ENCODE measurements at regions of chr6 and their contacts with region 1.

Region 1: DNA sequence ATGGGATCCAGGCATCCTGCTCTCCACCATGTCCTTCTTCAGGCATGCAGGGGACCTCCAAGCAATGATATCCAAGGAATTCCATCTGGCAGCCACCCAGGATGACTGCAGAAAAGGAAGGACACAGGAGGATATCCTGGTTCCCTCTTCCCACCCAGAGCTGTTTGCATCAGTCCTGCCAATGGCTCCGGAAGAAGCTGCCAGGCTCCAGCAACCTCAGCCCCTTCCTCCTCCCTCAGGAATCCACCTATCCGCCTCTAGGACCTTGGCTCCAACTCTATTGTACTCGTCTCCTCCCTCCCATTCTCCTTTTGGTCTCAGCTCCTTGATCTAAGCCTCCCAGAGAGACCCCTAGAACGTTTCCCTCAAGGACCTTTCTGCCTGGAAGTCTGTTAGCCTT is 733 bp upstream of the PSORS1C2 start:
- DNase-seq: no peak
- ATAC-seq: no peak
- H3K4me3 ChIP-seq: no peak overlapping the region
- H3K27ac ChIP-seq: no peak overlapping the region
- H3K4me1 ChIP-seq: peaks cover 4 to 13% of the 10 kb centered on the region in 2 experiments; a peak in 3 of 4 replicates
- H3K27me3 ChIP-seq: no peaks in the 10 kb centered on the region
- CTCF ChIP-seq: no peak
- POLR2A ChIP-seq: no peak
- RAD21 ChIP-seq: no peak

Region 2: DNA sequence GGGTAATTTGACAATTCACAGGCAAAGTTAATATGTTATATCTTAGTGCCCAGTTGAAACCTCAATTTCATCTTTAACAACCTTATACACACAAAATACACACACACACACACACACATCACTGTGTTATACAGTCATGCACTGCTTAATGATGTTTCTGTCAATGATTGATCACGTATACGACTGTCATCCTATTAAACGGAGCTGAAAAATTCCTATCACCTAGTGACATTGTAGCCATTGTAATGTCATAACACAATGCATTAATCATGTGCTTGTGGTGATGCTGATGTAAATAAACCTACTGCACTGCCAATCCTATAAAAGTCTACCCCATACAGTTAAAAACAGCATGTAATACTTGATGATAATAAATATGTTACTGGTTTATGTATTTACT is 715.0 kb before region 1 on chr6:
- CTCF ChIA-PET with region 1: no interaction called
- POLR2A ChIA-PET with region 1: no interaction called
- RAD21 ChIA-PET with region 1: no interaction called
- intact Hi-C with region 1: no loop called
- DNase-seq: no peak
- ATAC-seq: no peak
- H3K4me3 ChIP-seq: no peak overlapping the region
- H3K27ac ChIP-seq: no peak overlapping the region
- H3K4me1 ChIP-seq: no peaks in the 10 kb centered on the region
- H3K27me3 ChIP-seq: peaks cover 8% of the 10 kb centered on the region
- CTCF ChIP-seq: no peak
- POLR2A ChIP-seq: no peak
- RAD21 ChIP-seq: no peak

Region 3: DNA sequence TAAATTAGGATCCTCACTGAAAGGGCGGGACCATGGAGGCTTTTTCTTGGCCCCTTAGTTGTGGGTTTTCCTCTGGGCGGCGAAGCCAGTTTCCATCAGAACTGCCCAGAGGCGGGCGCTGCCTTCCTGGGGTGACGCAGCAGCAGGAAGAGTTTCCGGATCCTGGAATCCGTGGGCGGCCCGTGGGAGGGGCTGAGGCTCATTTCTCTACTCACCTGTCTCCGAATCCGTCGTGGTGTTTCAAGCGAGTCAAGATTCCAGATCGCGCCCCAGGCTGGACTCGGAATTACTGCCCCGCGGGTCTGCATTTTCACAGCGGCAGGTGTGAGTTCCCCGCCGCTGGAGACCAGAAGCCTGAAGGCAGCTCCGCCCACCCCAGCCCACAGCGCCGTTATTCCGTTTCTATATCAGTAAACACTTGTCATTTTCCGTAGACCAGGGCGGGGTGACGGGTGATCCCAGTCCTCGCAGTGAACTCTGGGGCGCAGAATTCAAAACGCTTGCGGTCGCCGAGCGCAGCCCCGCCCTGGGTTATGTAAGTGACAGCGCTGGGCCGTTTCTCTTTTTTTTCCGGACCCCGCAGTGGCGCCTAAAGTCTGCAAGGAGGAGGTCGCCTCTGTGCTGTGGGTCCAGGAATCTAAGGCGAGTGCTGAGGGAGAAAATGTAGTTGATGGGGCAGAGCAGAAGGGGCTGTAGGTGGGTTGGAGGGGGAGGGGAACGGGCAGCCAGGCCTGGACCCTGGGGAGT is 58.1 kb after region 1 on chr6:
- CTCF ChIA-PET with region 1: interaction called, 7 read pairs
- POLR2A ChIA-PET with region 1: no interaction called
- RAD21 ChIA-PET with region 1: no interaction called
- intact Hi-C with region 1: loop called (anchors 1 kb)
- DNase-seq: peak; percentile 66
- ATAC-seq: peak; percentile 81
- H3K4me3 ChIP-seq: peak overlapping the region; percentile 79 to 88
- H3K27ac ChIP-seq: peak overlapping the region; percentile 95
- H3K4me1 ChIP-seq: peaks cover 12 to 30% of the 10 kb centered on the region in 2 experiments
- H3K27me3 ChIP-seq: no peaks in the 10 kb centered on the region
- CTCF ChIP-seq: no peak
- POLR2A ChIP-seq: peak; percentile 38
- RAD21 ChIP-seq: 0 out of 2 replicates have a peak, but pooled peaks have one; percentile 5

Measured in HCT116 (cell line).